Esophagus squamous epithelium (tissue), 5 donors: ENCODE measurements at regions of chr1 and their contacts with region 1.

Region 1: GRCh38 chr1:64823691-64824476 is 79.0 kb downstream of the RAVER2 start:
- DNase-seq: no peak
- H3K4me3 ChIP-seq: no peak overlapping the region
- H3K27ac ChIP-seq: no peak overlapping the region
- H3K4me1 ChIP-seq: peaks cover 0 to 9% (median 0%) of the 10 kb centered on the region in 3 donors
- H3K27me3 ChIP-seq: no peaks in the 10 kb centered on the region
- CTCF ChIP-seq: peak; percentile 79 to 89 (median 84)
- POLR2A ChIP-seq: no peak

Region 2: DNA sequence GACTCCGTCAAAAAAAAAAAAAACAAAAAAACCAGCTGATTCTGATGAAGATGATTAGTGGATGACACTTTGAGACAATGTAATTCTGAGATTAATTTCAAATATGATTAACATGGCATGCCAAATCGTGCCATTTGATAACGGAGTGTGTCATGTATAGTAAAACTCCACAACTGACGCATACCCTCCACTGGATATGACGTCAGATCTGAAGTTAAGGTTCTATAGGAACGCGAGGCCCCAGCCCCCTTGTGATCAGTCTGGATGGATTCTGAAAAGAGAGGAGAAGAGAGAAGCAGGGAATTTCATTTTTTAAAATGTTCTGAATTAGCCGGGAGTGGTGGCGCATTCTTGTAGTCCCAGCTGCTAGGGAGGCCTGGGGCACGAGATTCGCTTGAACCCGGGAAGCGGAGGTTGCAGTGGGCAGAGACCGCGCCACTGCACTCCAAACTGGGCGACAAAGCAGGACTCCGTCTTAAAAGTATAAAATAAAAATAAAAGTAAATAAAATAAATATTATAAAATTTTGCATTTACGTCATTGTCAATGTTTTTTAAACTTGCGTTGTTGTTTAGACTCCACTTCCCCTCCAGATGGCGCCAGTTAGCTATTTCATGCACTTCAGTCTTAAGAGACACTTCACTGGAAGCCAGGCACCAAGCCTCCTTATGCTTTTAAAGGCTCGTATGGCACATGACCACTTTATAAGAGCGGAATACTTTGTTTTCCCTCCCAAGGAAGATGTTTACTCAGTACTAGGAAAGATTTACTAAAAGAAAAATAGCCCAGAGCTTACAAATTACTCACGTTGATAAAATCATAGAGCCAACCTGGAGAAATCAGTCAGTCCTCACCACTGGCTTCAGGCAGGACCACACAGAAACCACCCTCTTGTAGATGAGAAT is 555.0 kb before region 1 on chr1:
- intact Hi-C with region 1: loop called (anchors 10 kb)
- DNase-seq: no peak
- H3K4me3 ChIP-seq: no peak overlapping the region
- H3K27ac ChIP-seq: no peak overlapping the region
- H3K4me1 ChIP-seq: peaks cover 0 to 14% (median 5%) of the 10 kb centered on the region in 3 donors
- H3K27me3 ChIP-seq: no peaks in the 10 kb centered on the region
- CTCF ChIP-seq: peak; percentile 31 to 80 (median 74)
- POLR2A ChIP-seq: no peak

Region 3: GRCh38 chr1:64686828-64687724 is 136.8 kb before region 1 on chr1:
- intact Hi-C with region 1: loop called (anchors 10 kb)
- DNase-seq: no peak
- H3K4me3 ChIP-seq: no peak overlapping the region
- H3K27ac ChIP-seq: no peak overlapping the region
- H3K4me1 ChIP-seq: peaks cover 0 to 16% (median 7%) of the 10 kb centered on the region in 3 donors
- H3K27me3 ChIP-seq: no peaks in the 10 kb centered on the region
- CTCF ChIP-seq: peak; percentile 57 to 82 (median 80)
- POLR2A ChIP-seq: no peak

Region 4: DNA sequence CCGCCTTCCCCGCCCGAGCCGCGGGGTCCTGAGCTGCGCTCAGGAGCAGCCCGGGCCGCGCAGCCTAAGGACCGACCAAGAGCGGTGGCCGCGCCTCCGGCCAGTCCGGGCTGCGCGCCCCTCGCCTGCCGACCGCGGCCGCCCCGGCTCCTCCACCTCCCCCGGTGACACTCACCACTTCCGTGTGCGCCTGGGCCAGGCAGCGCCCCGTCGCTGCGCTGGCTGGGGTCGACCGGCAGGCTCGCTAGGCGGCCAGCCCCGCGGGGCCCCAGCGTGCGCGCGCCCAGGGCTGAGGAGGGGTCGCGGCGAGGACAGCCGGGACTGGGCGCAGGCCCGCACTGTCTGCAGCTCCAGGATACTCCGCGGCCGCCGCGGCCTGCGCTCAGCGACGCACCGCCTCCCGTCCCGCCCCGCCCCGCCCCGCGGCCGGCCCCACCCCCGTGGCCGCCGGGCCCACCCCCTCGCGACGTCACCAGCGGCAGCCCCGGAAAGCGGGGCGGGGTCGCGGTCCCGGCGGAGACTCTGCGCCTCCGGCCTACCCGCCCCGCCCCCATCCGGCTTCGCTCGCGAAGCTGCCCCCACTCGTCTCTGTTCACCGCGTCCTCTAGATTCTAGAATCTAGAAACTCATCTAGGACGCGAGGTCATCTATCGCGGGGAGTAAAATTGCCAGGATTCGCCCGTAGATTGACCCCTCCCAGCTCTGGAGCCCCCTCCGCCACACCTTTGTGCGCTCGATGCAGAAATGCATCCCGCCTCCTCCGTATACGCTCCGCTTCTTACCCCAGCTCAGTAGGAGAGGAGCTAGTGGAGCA is 142.5 kb after region 1 on chr1 and contains the start of gene JAK1:
- intact Hi-C with region 1: no loop called
- DNase-seq: peak; percentile 35
- H3K4me3 ChIP-seq: peak within 1 kb of the TSS; percentile 81 to 100 (median 98)
- H3K27ac ChIP-seq: peak within 1 kb of the TSS; percentile 92 to 99 (median 98)
- H3K4me1 ChIP-seq: peaks cover 7 to 61% (median 23%) of the 10 kb centered on the region in 3 donors
- H3K27me3 ChIP-seq: no peaks in the 10 kb centered on the region
- CTCF ChIP-seq: peak in 2 of 6 experiments; percentile 13 to 41
- POLR2A ChIP-seq: peak in 3 of 4 donors; percentile 63 to 96 (median 81)
- total RNA-seq, gene JAK1: 59.7 to 92.7 (median 64.1) TPM